MCF 10A (cell line): ENCODE measurements at regions of chr6 and their contacts with region 1.

Region 1: GRCh38 chr6:9250852-9251251 is 815.5 kb upstream of the SLC35B3 start:
- DNase-seq: peak; percentile 78
- H3K4me3 Mint-ChIP-seq: no peak overlapping the region
- H3K27ac Mint-ChIP-seq: no peak overlapping the region
- H3K4me1 Mint-ChIP-seq: no peaks in the 10 kb centered on the region
- H3K27me3 Mint-ChIP-seq: no peaks in the 10 kb centered on the region
- CTCF ChIP-seq: peak; percentile 69

Region 2: DNA sequence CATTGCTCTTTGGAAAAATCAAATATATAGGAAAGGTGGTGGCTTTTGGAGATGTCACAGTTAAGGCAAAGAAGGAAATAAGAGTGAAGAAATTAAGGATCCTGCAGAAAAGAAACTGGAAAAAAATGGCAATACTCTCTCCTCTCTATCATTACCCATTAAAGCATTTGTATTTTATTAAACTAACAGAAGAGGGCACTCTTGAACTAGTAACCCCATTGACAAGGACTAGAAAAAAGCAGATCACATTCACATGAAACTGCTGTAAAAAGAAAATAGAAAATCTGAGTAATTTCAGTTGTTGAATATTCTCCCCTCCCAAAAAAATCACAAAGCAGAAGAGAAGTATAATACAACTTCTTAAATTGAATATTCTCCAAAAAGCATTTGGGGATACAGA is 711.4 kb before region 1 on chr6:
- CTCF ChIA-PET with region 1: interaction called, 4 read pairs
- POLR2A ChIA-PET with region 1: no interaction called
- intact Hi-C with region 1: loop called (anchors 5 kb)
- DNase-seq: peak; percentile 55
- H3K4me3 Mint-ChIP-seq: no peak overlapping the region
- H3K27ac Mint-ChIP-seq: peak overlapping the region; percentile 13
- H3K4me1 Mint-ChIP-seq: peaks cover 9% of the 10 kb centered on the region
- H3K27me3 Mint-ChIP-seq: no peaks in the 10 kb centered on the region
- CTCF ChIP-seq: peak; percentile 54

Region 3: DNA sequence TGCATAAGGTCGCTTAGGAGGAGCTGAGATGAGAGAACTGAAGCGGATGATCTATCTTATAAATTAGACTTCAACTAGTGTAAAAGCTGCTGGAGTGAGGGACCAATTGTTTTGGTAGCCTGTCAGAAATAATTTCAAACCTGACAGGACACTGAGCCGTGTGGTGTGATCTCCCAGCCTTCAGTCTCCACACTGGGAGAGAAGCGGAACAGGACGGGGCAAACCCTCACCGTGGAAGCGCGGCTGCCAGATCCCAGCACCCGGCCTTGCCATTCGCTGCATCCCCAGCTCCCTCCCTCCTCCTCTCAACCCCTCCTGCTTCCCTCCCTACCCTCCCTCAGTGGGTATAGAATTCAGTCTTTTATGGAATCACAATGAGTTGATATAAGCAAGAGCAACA is 84.6 kb after region 1 on chr6:
- CTCF ChIA-PET with region 1: no interaction called
- POLR2A ChIA-PET with region 1: no interaction called
- intact Hi-C with region 1: no loop called
- DNase-seq: no peak
- H3K4me3 Mint-ChIP-seq: no peak overlapping the region
- H3K27ac Mint-ChIP-seq: no peak overlapping the region
- H3K4me1 Mint-ChIP-seq: no peaks in the 10 kb centered on the region
- H3K27me3 Mint-ChIP-seq: no peaks in the 10 kb centered on the region
- CTCF ChIP-seq: no peak

Region 4: DNA sequence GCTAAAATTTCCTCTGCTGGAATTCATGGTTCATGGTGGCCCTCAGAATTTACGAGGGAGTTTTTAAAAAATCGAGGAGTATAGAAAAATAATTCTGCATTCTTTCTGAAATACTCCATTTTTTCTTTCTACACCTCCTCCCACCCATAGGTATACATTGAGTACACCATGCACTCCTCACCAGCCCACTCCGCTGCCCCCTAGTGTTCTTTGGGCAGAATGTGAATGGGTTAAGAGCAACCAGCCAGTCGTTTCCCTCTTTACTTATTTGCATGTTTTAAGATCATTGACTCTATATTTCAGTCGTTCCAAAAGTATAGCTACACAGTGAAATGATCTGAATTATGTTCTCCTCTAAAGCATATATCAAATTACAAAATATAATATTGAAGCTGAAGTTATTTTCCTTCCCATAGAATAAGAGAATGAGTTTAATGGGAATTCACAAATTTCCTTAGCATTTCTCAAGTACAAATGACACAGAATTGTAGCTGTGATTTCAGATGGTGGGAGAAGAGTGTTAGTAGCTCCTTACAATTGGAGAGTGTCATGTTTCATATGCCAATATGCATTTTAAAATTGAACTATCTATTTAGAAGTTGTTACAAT is 162.2 kb after region 1 on chr6:
- CTCF ChIA-PET with region 1: no interaction called
- POLR2A ChIA-PET with region 1: interaction called, 3 read pairs
- intact Hi-C with region 1: loop called (anchors 5 kb)
- DNase-seq: peak; percentile 69
- H3K4me3 Mint-ChIP-seq: no peak overlapping the region
- H3K27ac Mint-ChIP-seq: no peak overlapping the region
- H3K4me1 Mint-ChIP-seq: no peaks in the 10 kb centered on the region
- H3K27me3 Mint-ChIP-seq: no peaks in the 10 kb centered on the region
- CTCF ChIP-seq: peak; percentile 36

Region 5: GRCh38 chr6:9540534-9541126 is 289.8 kb after region 1 on chr6:
- CTCF ChIA-PET with region 1: interaction called, 3 read pairs
- POLR2A ChIA-PET with region 1: no interaction called
- intact Hi-C with region 1: loop called (anchors 1 kb)
- DNase-seq: peak; percentile 76
- H3K4me3 Mint-ChIP-seq: no peak overlapping the region
- H3K27ac Mint-ChIP-seq: no peak overlapping the region
- H3K4me1 Mint-ChIP-seq: no peaks in the 10 kb centered on the region
- H3K27me3 Mint-ChIP-seq: no peaks in the 10 kb centered on the region
- CTCF ChIP-seq: peak; percentile 59

Region 6: DNA sequence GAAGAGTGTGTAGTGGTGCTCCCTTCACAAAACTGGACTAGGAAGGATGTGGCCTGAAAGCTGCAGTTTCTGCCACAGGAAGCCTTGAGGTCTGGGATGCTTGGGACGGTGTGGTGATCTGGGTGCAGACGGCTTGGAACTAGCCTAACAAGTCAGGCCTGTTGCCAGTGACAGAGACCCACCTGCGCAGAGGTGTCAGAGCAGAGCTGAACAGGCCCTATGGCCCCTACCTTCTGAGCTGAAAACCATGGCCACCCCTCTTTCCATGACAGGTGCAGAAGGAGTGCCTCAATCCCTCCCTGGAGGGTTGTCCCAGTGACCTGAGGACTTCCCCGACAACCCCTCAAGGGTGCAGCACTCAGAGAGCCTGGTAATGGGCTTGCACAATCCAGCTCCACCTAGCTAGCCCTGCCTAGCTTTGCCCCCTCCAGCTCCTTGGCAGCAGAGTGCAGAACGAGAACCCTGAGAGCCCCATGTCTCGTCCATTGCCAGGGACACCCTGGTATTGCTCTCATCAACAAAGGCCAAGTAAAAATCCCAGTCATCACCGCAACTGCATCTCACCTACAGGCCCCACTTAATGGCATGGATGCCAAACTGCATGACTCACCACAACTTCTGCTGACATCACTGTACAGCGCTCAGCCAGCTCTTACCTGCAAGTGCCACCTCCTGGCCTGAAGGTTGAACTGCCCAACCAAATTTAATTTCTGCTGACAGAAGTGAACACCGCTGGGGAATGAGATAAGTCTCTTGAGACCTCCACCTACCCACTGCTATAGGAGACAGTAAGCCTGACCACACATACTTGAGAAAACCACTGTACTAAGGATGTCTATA is 600.9 kb after region 1 on chr6:
- CTCF ChIA-PET with region 1: no interaction called
- POLR2A ChIA-PET with region 1: no interaction called
- intact Hi-C with region 1: loop called (anchors 2 kb)
- DNase-seq: peak; percentile 85
- H3K4me3 Mint-ChIP-seq: no peak overlapping the region
- H3K27ac Mint-ChIP-seq: no peak overlapping the region
- H3K4me1 Mint-ChIP-seq: no peaks in the 10 kb centered on the region
- H3K27me3 Mint-ChIP-seq: no peaks in the 10 kb centered on the region
- CTCF ChIP-seq: peak; percentile 41

Region 7: GRCh38 chr6:10030942-10031537 is 780.2 kb after region 1 on chr6:
- CTCF ChIA-PET with region 1: no interaction called
- POLR2A ChIA-PET with region 1: no interaction called
- intact Hi-C with region 1: no loop called
- DNase-seq: peak; percentile 49
- H3K4me3 Mint-ChIP-seq: no peak overlapping the region
- H3K27ac Mint-ChIP-seq: no peak overlapping the region
- H3K4me1 Mint-ChIP-seq: peaks cover 7% of the 10 kb centered on the region
- H3K27me3 Mint-ChIP-seq: no peaks in the 10 kb centered on the region
- CTCF ChIP-seq: peak; percentile 54

Region 8: GRCh38 chr6:10082385-10082784 is 831.5 kb after region 1 on chr6:
- CTCF ChIA-PET with region 1: interaction called, 3 read pairs
- POLR2A ChIA-PET with region 1: interaction called, 3 read pairs
- intact Hi-C with region 1: loop called (anchors 5 kb)
- DNase-seq: peak; percentile 71
- H3K4me3 Mint-ChIP-seq: no peak overlapping the region
- H3K27ac Mint-ChIP-seq: peak overlapping the region; percentile 33
- H3K4me1 Mint-ChIP-seq: peaks cover 49% of the 10 kb centered on the region
- H3K27me3 Mint-ChIP-seq: no peaks in the 10 kb centered on the region
- CTCF ChIP-seq: no peak